ENCODE measurements at regions of chr2 and their contacts with region 1.

Region 1: DNA sequence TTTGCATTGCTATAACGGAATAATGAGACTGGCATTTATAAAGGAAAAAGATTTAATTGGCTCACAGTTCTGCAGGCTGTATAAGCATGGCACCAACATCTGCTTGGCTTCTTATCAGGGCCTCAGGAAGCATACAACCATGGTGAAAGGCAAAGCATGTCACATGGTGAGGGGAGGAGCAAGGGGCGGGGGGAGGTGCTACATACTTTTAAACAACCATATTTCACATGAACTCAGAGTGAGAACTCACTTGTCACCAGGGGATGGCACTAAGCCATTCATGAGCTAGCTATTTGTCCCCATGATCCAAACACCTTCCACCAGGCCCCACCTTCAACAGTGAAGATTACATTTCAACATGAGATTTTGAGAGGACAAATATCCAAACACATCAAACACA is 188.7 kb downstream of the MBD5 start:
- DNase-seq: no peak
- ATAC-seq: 0 out of 2 replicates have a peak, but pooled peaks have one; percentile 42
- H3K4me3 ChIP-seq: no peak overlapping the region
- H3K27ac ChIP-seq: no peak overlapping the region
- H3K4me1 ChIP-seq: no peaks in the 10 kb centered on the region
- H3K27me3 ChIP-seq: no peaks in the 10 kb centered on the region
- CTCF ChIP-seq: no peak

Region 2: DNA sequence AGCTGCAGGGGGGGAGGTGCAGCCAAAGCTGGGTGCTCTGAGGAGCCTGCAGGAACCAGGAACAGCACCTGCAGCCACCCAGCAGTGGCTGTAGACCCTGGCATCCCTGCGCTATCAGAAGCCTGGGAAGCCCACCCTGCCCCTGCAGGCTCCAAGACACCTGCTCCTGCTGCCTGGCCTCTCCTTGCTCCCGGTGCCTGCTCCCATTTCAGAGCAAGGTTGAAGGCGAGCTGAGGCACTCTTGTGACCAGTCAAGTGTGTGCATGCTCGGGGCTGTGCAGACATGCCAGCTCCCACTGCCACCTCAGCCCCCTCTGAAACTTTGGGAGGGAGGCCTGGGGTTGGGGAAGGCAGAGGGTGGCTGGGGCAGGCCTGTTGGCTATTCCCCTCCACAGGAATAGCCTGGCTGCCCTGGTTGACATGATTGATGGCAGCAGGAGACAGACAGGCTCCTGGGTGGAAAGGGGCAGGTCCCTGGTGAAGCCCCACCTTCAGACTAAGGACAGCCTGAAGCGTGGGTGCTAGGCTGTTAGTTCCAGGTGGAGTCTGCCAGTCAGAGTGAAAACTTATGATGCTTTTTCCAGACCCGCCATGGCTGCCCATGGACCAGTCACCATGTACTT is 37.4 kb before region 1 on chr2:
- CTCF ChIA-PET with region 1: no interaction called
- POLR2A ChIA-PET with region 1: interaction called, 11 read pairs
- in situ Hi-C with region 1: no loop called
- intact Hi-C with region 1: no loop called
- DNase-seq: no peak
- ATAC-seq: no peak
- H3K4me3 ChIP-seq: no peak overlapping the region
- H3K27ac ChIP-seq: no peak overlapping the region
- H3K4me1 ChIP-seq: no peaks in the 10 kb centered on the region
- H3K27me3 ChIP-seq: no peaks in the 10 kb centered on the region
- CTCF ChIP-seq: no peak

Measured in Panc1 (cell line).